Ascending aorta (tissue), 2 donors: ENCODE measurements at regions of chr11 and their contacts with region 1.

Region 1: DNA sequence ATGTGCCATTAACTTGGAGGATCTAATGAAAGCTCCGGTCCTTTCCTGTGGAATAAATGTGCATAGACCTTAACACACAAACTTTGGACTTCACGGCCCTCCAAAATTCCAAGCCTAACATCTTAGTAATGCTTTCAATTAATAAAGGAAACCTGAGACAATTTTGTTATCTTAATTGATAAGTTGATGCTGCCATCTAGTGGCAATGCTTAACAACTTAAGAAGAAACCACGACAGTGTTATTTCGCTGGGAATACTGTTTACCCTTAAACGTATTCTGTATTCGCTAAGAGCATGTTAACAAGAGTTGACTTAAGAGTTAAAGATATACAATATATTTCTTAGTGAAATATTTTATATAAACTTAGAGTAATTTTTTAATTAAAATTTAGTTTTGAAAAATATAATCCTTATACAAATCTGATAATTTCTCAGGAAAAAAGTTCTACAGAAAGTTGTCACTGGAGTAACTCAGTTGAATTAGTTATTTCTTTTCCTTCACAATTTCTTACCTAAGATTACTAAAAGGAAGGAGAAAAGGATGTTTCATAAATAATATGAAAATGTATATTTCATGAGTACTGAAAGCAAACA is 35.0 kb upstream of the OR9G4 start:
- DNase-seq: no peak
- H3K4me3 ChIP-seq: peak overlapping the region; percentile 24 to 33
- H3K27ac ChIP-seq: no peak overlapping the region
- H3K4me1 ChIP-seq: no peaks in the 10 kb centered on the region
- H3K27me3 ChIP-seq: no peaks in the 10 kb centered on the region
- CTCF ChIP-seq: peak in 2 of 3 experiments; percentile 44 to 53

Region 2: DNA sequence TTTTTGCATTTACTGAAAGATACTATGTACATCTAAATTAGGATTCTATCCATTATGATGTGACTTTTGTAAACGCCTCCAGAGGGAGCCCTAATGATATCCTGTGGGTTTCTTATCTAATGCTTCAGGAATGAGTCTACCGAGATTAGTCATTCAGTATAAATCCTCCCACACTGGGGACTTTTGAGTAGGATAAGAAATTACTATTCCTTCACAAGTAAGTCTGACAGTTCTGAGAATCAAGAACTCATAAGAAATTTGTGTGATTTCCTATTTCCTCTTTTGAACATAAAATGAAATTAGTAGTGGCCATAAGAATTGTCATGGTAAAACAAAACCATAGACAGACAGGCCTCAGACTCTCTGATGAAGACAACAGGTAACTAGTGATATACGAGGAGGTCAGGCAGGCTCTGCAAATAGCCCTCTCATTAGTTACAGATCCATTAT is 158.9 kb before region 1 on chr11:
- intact Hi-C with region 1: loop called (anchors 2 kb)
- DNase-seq: no peak
- H3K4me3 ChIP-seq: no peak overlapping the region
- H3K27ac ChIP-seq: no peak overlapping the region
- H3K4me1 ChIP-seq: no peaks in the 10 kb centered on the region
- H3K27me3 ChIP-seq: no peaks in the 10 kb centered on the region
- CTCF ChIP-seq: peak in 2 of 3 experiments; percentile 35 to 42

Region 3: DNA sequence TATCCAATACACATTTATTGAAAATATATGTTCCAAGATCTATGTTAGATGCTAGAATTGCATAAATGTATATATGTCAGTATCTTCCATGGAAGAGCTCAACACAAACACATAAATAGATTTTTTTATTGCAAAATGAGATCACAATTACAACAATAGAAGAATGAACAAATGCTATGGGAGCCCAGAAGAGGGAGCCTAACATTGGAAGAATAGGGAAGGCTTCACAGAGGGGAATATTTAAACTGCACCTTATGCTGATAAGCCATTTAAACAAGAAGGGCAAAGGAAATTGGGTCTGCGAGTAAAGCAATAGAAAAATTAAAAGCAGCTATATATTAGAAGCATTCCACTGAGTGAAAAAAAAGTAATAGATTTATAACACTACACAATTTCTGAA is 302.1 kb after region 1 on chr11:
- intact Hi-C with region 1: no loop called
- DNase-seq: no peak
- H3K4me3 ChIP-seq: no peak overlapping the region
- H3K27ac ChIP-seq: no peak overlapping the region
- H3K4me1 ChIP-seq: no peaks in the 10 kb centered on the region
- H3K27me3 ChIP-seq: no peaks in the 10 kb centered on the region
- CTCF ChIP-seq: no peak